Right cardiac atrium (tissue), 5 donors: ENCODE measurements at regions of chr1 and their contacts with region 1.

Region 1: DNA sequence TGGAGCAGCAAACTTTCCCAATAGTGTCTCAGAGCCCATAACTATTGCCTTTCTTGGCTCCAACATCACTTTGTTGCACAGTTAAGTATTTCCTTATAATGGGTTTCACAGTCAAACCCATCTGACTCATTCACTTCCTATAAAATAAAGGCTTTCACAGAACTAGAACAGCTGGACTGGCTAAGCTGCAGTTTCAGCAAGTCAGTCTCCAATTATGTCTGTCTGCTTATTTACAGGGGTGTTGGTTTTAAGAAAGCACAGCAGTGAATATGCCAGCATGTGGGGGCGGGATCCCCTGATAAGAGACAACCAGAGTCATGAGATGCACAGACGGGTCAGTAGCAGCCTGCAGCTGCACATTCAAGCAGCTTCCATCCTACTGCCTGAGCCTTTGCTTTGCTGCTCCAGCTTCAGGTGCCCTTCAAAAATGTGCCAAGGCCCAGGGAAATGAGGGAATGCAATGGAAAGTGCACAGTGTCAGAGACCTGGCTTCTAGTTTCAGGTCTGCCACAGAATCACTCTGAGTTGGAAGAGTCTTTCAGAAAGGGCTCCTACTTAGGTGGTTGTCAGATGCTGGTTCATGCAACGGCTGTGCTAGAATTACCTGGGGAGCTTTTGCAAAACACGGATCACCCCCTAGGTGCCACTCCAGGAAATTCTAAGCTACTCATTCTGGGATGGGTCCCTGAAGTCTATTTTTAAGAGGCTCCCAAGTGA is 24.8 kb downstream of the RNF19B start:
- DNase-seq: peak; percentile 68 to 77 (median 72)
- ATAC-seq: peak; percentile 83 to 92
- H3K4me3 ChIP-seq: no peak overlapping the region
- H3K27ac ChIP-seq: peak overlapping the region; percentile 36
- H3K4me1 ChIP-seq: peaks cover 3% of the 10 kb centered on the region
- H3K27me3 ChIP-seq: no peaks in the 10 kb centered on the region

Region 2: DNA sequence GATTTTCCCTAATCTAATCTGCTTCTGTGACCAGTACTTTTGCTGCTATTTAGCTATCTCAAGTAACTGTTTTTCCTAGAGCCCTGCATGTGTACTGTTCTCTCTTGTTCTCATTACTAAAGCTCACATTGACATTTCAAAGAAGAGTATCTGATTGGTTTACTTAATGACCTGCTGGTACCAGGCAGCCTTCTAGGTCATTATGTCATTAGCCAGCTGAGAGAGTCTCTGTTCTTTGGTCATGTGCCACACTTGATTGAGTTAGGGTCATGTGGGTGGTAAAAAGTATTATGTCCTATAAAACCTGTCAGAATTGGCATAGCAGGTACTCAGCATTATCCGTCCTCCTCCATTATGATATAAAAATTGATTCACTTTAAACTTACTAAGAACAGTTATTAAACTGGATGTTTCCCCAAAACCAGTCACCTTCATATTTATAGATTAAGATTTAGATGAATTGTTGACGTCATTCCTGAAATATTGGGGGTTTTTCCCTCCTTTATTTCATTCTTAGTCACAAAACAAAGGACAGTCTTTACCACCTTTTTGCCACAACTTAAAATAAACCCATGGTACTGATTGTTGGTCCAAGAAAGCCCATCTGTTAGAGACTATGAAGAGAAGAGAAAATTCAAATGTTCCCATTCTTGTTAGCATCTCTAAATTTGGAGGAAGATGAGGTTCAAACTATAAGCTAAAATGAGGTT is 91.3 kb before region 1 on chr1:
- intact Hi-C with region 1: no loop called
- DNase-seq: no peak
- ATAC-seq: no peak
- H3K4me3 ChIP-seq: no peak overlapping the region
- H3K27ac ChIP-seq: no peak overlapping the region
- H3K4me1 ChIP-seq: no peaks in the 10 kb centered on the region
- H3K27me3 ChIP-seq: no peaks in the 10 kb centered on the region

Region 3: GRCh38 chr1:33007190-33008050 is 67.6 kb after region 1 on chr1:
- intact Hi-C with region 1: loop called in 2 of 4 experiments (anchors 10 kb)
- DNase-seq: peak in 1 of 3 donors; percentile 48
- ATAC-seq: peak; percentile 73 to 81
- H3K4me3 ChIP-seq: no peak overlapping the region
- H3K27ac ChIP-seq: peak overlapping the region; percentile 25
- H3K4me1 ChIP-seq: peaks cover 29% of the 10 kb centered on the region
- H3K27me3 ChIP-seq: no peaks in the 10 kb centered on the region

Region 4: DNA sequence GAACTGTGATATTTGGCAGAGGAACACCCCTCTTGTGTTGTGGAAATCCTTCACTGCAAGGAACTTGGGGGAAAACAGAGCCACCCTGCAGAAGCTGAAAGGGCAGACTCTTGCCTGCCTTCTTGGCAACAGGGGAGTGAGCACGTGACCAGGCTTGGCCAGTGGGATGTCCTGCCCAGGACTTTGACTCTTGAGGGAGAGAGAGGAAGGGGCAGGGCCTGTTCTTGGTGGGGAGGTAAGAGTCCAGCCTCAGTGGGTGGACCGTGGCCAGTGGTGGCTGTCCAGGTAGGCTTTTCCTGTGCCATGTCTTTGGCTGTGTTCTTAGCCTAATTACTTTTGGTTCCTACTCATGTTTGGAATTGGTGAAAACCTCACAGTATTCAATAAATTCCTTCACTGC is 105.4 kb after region 1 on chr1:
- intact Hi-C with region 1: loop called in 2 of 4 experiments (anchors 10 kb)
- DNase-seq: peak in 2 of 3 donors; percentile 64 to 72
- ATAC-seq: peak; percentile 54 to 62
- H3K4me3 ChIP-seq: no peak overlapping the region
- H3K27ac ChIP-seq: no peak overlapping the region
- H3K4me1 ChIP-seq: peaks cover 3% of the 10 kb centered on the region
- H3K27me3 ChIP-seq: no peaks in the 10 kb centered on the region

Region 5: GRCh38 chr1:33055210-33056008 is 115.6 kb after region 1 on chr1:
- intact Hi-C with region 1: loop called in 2 of 4 experiments (anchors 5 to 10 kb)
- DNase-seq: peak; percentile 87 to 92 (median 89)
- ATAC-seq: peak; percentile 97
- H3K4me3 ChIP-seq: no peak overlapping the region
- H3K27ac ChIP-seq: peak overlapping the region; percentile 81
- H3K4me1 ChIP-seq: peaks cover 7% of the 10 kb centered on the region
- H3K27me3 ChIP-seq: no peaks in the 10 kb centered on the region

Region 6: GRCh38 chr1:33080885-33081553 is 141.2 kb after region 1 on chr1 and contains the start of gene AZIN2:
- intact Hi-C with region 1: loop called in 3 of 4 experiments (anchors 10 kb)
- DNase-seq: peak; percentile 98 to 99 (median 99)
- ATAC-seq: peak; percentile 99
- H3K4me3 ChIP-seq: peak within 1 kb of the TSS; percentile 63
- H3K27ac ChIP-seq: no peak within 1 kb of the TSS
- H3K4me1 ChIP-seq: no peaks in the 10 kb centered on the region
- H3K27me3 ChIP-seq: no peaks in the 10 kb centered on the region
- total RNA-seq, gene AZIN2: 4.1 to 7.9 (median 5.4) TPM